Naive thymus-derived CD8-positive, alpha-beta T cell (primary cell): ENCODE measurements at regions of chr19 and their contacts with region 1.

Region 1: GRCh38 chr19:39341719-39342604 is at the start of gene SAMD4B:
- DNase-seq: peak; percentile 94 to 100 (median 99)
- ATAC-seq: peak; percentile 85 to 87
- H3K4me3 Mint-ChIP-seq: peak within 1 kb of the TSS; percentile 94 to 99 (median 98)
- H3K27ac Mint-ChIP-seq: peak within 1 kb of the TSS; percentile 95 to 99 (median 97)
- H3K4me1 Mint-ChIP-seq: peaks cover 53 to 78% (median 72%) of the 10 kb centered on the region in 4 donors
- H3K27me3 Mint-ChIP-seq: no peaks in the 10 kb centered on the region
- polyA plus RNA-seq, gene SAMD4B: 5.4 to 12.3 (median 6.4) TPM

Region 2: GRCh38 chr19:39237200-39238184 is 104.5 kb before region 1 on chr19:
- POLR2A ChIA-PET with region 1: interaction called, 11 read pairs
- DNase-seq: peak in 9 of 10 donors; percentile 8 to 68 (median 29)
- ATAC-seq: peak; percentile 68 to 84
- H3K4me3 Mint-ChIP-seq: peak overlapping the region; percentile 76 to 91 (median 82)
- H3K27ac Mint-ChIP-seq: peak overlapping the region; percentile 87 to 96 (median 92)
- H3K4me1 Mint-ChIP-seq: peaks cover 18 to 36% (median 29%) of the 10 kb centered on the region in 4 donors
- H3K27me3 Mint-ChIP-seq: peaks cover 0 to 2% (median 0%) of the 10 kb centered on the region in 5 donors

Region 3: GRCh38 chr19:39390755-39391592 is 49.0 kb after region 1 on chr19 and contains the starts of genes MED29 and PAF1:
- POLR2A ChIA-PET with region 1: interaction called, 22 read pairs
- DNase-seq: peak; percentile 86 to 99 (median 97)
- ATAC-seq: peak; percentile 91 to 95
- H3K4me3 Mint-ChIP-seq: peak within 1 kb of the TSS; percentile 95 to 98 (median 98)
- H3K27ac Mint-ChIP-seq: peak within 1 kb of the TSS; percentile 94 to 100 (median 100)
- H3K4me1 Mint-ChIP-seq: peaks cover 15 to 58% (median 50%) of the 10 kb centered on the region in 4 donors
- H3K27me3 Mint-ChIP-seq: no peaks in the 10 kb centered on the region
- polyA plus RNA-seq, gene MED29: 48.1 to 71.4 (median 59.6) TPM
- polyA plus RNA-seq, gene PAF1: 30.7 to 53.0 (median 43.8) TPM

Region 4: GRCh38 chr19:39532233-39533002 is 190.5 kb after region 1 on chr19 and contains the start of gene EID2B:
- POLR2A ChIA-PET with region 1: interaction called, 10 read pairs
- DNase-seq: peak; percentile 90 to 97 (median 95)
- ATAC-seq: peak; percentile 90 to 91
- H3K4me3 Mint-ChIP-seq: peak within 1 kb of the TSS; percentile 88 to 97 (median 92)
- H3K27ac Mint-ChIP-seq: peak within 1 kb of the TSS; percentile 83 to 96 (median 94)
- H3K4me1 Mint-ChIP-seq: peaks cover 10 to 53% (median 28%) of the 10 kb centered on the region in 4 donors
- H3K27me3 Mint-ChIP-seq: no peaks in the 10 kb centered on the region
- polyA plus RNA-seq, gene EID2B: 4.9 to 7.6 (median 6.4) TPM